ENCODE measurements at regions of chr14 and their contacts with region 1.

Region 1: GRCh38 chr14:76168531-76168930 is 16.8 kb downstream of the GPATCH2L start:
- DNase-seq: no peak
- ATAC-seq: peak; percentile 24; the same call in 1 of the 3 replicates
- H3K4me3 ChIP-seq: no peak overlapping the region
- H3K27ac ChIP-seq: no peak overlapping the region
- H3K4me1 ChIP-seq: no peaks in the 10 kb centered on the region
- H3K27me3 ChIP-seq: no peaks in the 10 kb centered on the region
- CTCF ChIP-seq: no peak
- EP300 ChIP-seq: no peak
- POLR2A ChIP-seq: no peak
- RAD21 ChIP-seq: no peak

Region 2: GRCh38 chr14:76143642-76144041 is 24.9 kb before region 1 on chr14:
- CTCF ChIA-PET with region 1: no interaction called
- POLR2A ChIA-PET with region 1: no interaction called
- RAD21 ChIA-PET with region 1: no interaction called
- SMC1A ChIA-PET with region 1: no interaction called
- in situ Hi-C with region 1: no loop called
- intact Hi-C with region 1: no loop called
- DNase-seq: no peak
- ATAC-seq: no peak
- H3K4me3 ChIP-seq: no peak overlapping the region
- H3K27ac ChIP-seq: no peak overlapping the region
- H3K4me1 ChIP-seq: no peaks in the 10 kb centered on the region
- H3K27me3 ChIP-seq: peaks cover 5% of the 10 kb centered on the region in 2 experiments; a peak in 2 of 4 replicates
- CTCF ChIP-seq: no peak
- EP300 ChIP-seq: no peak
- POLR2A ChIP-seq: no peak
- RAD21 ChIP-seq: no peak

Region 3: DNA sequence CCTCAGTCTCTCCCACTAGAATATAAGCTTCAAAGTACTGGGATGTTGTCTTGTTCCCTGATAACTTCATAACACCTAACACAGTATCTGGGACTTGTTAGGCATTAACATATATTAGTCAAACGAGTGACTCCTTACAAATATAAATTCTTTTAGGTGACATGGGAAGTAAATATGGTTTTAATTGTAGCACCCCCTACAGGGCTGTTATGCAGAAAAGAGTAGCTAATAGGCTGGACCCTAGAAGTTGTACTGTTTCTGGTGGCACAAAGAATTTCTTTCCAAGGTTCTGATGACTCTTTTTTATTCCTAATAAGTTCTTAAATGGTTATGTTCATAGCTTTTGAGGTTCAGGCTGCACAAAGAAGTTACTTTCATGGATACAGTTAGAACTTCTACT is 13.0 kb after region 1 on chr14:
- CTCF ChIA-PET with region 1: interaction called, 13 read pairs
- POLR2A ChIA-PET with region 1: interaction called, 3 read pairs
- RAD21 ChIA-PET with region 1: interaction called, 5 read pairs
- SMC1A ChIA-PET with region 1: interaction called, 31 read pairs
- in situ Hi-C with region 1: no loop called
- intact Hi-C with region 1: loop called (anchors 2 kb)
- DNase-seq: no peak
- ATAC-seq: no peak
- H3K4me3 ChIP-seq: no peak overlapping the region
- H3K27ac ChIP-seq: no peak overlapping the region
- H3K4me1 ChIP-seq: peaks cover 17% of the 10 kb centered on the region
- H3K27me3 ChIP-seq: no peaks in the 10 kb centered on the region
- CTCF ChIP-seq: peak; percentile 11 to 25 (median 16); a peak in 1 of 6 replicates
- EP300 ChIP-seq: no peak
- POLR2A ChIP-seq: no peak
- RAD21 ChIP-seq: 0 out of 2 replicates have a peak, but pooled peaks have one; percentile 7

Region 4: DNA sequence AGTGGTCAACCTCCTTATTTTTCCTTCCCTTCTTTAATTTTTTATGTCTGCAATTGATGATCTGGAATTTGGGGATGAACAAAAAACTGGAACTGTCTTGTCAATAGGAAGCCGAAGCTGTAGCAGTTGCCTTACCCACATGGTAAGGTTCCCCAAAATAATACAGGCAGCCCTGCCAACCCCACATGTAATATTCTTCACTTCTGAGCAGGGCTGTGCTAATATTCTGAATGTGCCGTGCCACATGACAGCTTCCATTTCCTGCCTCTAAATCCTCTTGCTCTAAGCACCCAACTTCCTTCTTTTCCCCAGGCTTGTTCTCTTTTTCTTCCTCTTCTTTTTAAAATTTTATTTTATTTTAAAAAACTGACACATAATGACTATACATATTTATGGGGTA is 22.8 kb after region 1 on chr14:
- CTCF ChIA-PET with region 1: interaction called, 3 read pairs
- POLR2A ChIA-PET with region 1: interaction called, 3 read pairs
- RAD21 ChIA-PET with region 1: no interaction called
- SMC1A ChIA-PET with region 1: interaction called, 31 read pairs
- in situ Hi-C with region 1: no loop called
- intact Hi-C with region 1: no loop called
- DNase-seq: no peak
- ATAC-seq: peak; percentile 48
- H3K4me3 ChIP-seq: no peak overlapping the region
- H3K27ac ChIP-seq: peak overlapping the region; percentile 99
- H3K4me1 ChIP-seq: peaks cover 48% of the 10 kb centered on the region
- H3K27me3 ChIP-seq: no peaks in the 10 kb centered on the region
- CTCF ChIP-seq: no peak
- EP300 ChIP-seq: no peak
- POLR2A ChIP-seq: no peak
- RAD21 ChIP-seq: no peak

Measured in GM12878 (cell line).